ENCODE measurements at regions of chr4 and their contacts with region 1.

Region 1: DNA sequence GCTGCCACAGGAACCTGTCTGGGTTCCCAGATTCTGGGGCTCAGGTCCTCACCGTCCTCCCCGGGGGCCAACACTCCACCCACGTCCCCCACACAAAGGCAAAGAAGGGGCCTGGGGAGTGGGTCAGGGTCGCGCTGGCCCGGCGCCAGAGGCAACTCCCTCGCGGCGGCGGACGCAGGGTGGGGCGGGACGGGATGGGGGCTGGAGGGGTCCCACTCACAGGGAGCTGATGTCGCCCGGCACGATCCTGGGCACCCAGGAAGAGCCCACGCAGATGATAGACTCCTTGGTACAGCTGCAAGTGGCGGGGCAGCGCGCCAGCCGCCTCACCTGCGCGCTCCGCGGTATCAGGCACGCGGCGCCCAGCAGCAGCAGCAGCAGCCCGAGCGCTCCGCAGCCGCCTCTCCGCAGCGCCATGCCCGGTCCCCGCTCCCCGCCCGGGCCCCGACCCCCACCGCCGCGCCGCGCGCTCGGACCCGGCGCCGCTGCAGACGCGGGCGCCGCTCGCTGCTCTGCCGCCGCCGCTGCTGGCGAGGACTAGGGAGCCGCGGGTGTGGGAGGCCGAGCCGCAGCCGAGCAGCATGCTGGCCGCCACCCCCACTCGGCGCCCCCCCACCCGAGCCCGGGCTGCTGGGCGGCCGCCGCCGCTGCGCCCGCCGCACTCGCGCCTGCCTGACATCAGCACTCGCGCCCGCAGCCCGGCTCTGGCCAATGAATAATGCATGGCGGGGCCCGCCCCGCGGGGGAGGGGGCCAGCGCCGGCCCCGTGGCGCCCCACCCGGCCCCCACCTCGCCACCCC is at the start of gene LGI2:
- DNase-seq: peak in 1 of 2 experiments; percentile 46
- H3K4me3 ChIP-seq: peak within 1 kb of the TSS; percentile 52
- H3K4me3 Mint-ChIP-seq: peak within 1 kb of the TSS; percentile 72
- H3K27ac Mint-ChIP-seq: no peak within 1 kb of the TSS
- H3K4me1 ChIP-seq: 0 out of 2 replicates have a peak, but pooled peaks cover 6% of the 10 kb centered on the region
- H3K4me1 Mint-ChIP-seq: peaks cover 7% of the 10 kb centered on the region
- H3K27me3 ChIP-seq: no peaks in the 10 kb centered on the region
- H3K27me3 Mint-ChIP-seq: peaks cover 11% of the 10 kb centered on the region
- CTCF ChIP-seq: no peak
- total RNA-seq, gene LGI2: 7.5 and 8.3 TPM in 2 replicates

Region 2: GRCh38 chr4:25131926-25132325 is 101.4 kb after region 1 on chr4:
- CTCF ChIA-PET with region 1: no interaction called
- POLR2A ChIA-PET with region 1: no interaction called
- intact Hi-C with region 1: loop called (anchors 2 kb)
- DNase-seq: no peak
- H3K4me3 ChIP-seq: no peak overlapping the region
- H3K4me3 Mint-ChIP-seq: no peak overlapping the region
- H3K27ac Mint-ChIP-seq: no peak overlapping the region
- H3K4me1 ChIP-seq: peaks cover 30% of the 10 kb centered on the region
- H3K4me1 Mint-ChIP-seq: no peaks in the 10 kb centered on the region
- H3K27me3 ChIP-seq: no peaks in the 10 kb centered on the region
- H3K27me3 Mint-ChIP-seq: no peaks in the 10 kb centered on the region
- CTCF ChIP-seq: no peak

Region 3: DNA sequence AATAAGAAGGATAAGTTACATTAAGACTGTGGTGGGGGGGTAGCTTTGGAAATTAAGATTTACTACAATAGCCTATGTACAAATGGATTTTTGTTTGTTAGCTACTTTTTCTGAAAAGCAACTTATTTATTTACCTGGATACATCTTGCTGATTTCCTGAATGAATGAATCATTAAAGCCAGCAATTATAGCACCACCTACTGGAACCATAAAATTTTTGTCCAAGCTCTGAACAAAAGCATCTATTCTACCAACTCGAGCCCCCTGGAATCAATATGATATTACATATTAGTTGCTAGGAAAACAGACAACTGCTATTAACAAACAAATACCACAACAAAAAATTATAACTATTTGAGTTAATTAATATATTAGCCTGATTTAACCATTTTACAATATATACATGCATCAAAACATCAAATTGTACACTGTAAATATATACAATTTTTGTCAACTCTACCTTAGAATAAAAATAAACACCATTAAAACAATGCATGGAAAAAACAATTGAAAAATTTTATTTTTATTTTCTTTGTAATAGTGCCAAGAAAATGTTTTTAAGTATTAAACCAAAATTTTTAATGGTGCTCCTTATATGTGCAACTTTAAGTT is 114.5 kb after region 1 on chr4:
- CTCF ChIA-PET with region 1: interaction called, 7 read pairs
- POLR2A ChIA-PET with region 1: no interaction called
- intact Hi-C with region 1: loop called (anchors 1 kb)
- DNase-seq: peak in 1 of 2 experiments; percentile 35
- H3K4me3 ChIP-seq: no peak overlapping the region
- H3K4me3 Mint-ChIP-seq: no peak overlapping the region
- H3K27ac Mint-ChIP-seq: no peak overlapping the region
- H3K4me1 ChIP-seq: no peaks in the 10 kb centered on the region
- H3K4me1 Mint-ChIP-seq: no peaks in the 10 kb centered on the region
- H3K27me3 ChIP-seq: no peaks in the 10 kb centered on the region
- H3K27me3 Mint-ChIP-seq: no peaks in the 10 kb centered on the region
- CTCF ChIP-seq: peak; percentile 51 to 53

Measured in Caco-2 (cell line).